ENCODE measurements at regions of chr3 and their contacts with region 1.

Region 1: DNA sequence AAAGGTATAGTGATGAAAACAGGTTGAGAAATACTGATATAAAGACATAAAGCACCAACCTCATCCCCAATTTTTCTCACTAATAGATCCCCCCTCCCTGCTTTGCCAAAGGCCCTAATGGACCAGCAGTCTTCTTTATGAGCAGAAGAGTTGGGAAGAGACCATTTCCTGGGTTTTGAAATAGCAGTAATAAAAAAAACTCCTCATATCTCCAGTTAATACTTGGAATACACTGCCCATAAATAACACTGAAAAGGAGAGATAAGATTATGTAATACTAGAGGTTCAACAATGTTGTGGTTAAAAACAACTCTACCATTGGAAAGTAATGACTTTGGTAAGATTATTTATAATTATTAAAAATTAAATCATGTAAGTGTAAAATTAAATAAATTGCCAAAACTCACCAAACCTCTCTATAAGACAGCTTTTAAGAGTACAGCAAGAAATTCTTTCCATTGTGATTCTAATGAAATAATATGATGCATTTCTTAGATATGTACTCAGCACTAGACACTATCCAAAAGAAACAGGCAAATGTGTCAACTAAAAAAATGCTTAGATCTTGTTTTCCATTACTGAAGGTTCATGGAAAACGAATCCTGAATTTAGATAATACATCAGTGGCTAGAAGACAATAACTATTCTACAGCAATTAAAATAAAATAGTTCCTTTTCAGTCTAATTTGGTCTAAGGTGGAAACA is 88.2 kb downstream of the FAIM start:
- DNase-seq: no peak
- ATAC-seq: no peak
- H3K4me3 ChIP-seq: no peak overlapping the region
- H3K27ac ChIP-seq: no peak overlapping the region
- H3K4me1 ChIP-seq: no peaks in the 10 kb centered on the region
- H3K27me3 ChIP-seq: no peaks in the 10 kb centered on the region
- CTCF ChIP-seq: no peak
- POLR2A ChIP-seq: no peak

Region 2: GRCh38 chr3:138174421-138175122 is 522.2 kb before region 1 on chr3 and contains the start of gene DBR1:
- intact Hi-C with region 1: no loop called
- DNase-seq: peak; percentile 74 to 84 (median 78)
- ATAC-seq: peak; percentile 95 to 97 (median 96)
- H3K4me3 ChIP-seq: peak within 1 kb of the TSS; percentile 71 to 88 (median 75)
- H3K27ac ChIP-seq: peak within 1 kb of the TSS; percentile 38 to 65 (median 58)
- H3K4me1 ChIP-seq: peaks cover 0 to 13% (median 4%) of the 10 kb centered on the region in 4 donors
- H3K27me3 ChIP-seq: no peaks in the 10 kb centered on the region
- CTCF ChIP-seq: no peak
- POLR2A ChIP-seq: peak; percentile 87
- total RNA-seq, gene DBR1: 3.2 to 6.1 (median 4.6) TPM

Region 3: GRCh38 chr3:138923531-138923994 is 226.7 kb after region 1 on chr3:
- intact Hi-C with region 1: loop called in 1 of 2 experiments (anchors 5 kb)
- DNase-seq: peak; percentile 73 to 81 (median 76)
- ATAC-seq: peak; percentile 94 to 97 (median 95)
- H3K4me3 ChIP-seq: no peak overlapping the region
- H3K27ac ChIP-seq: no peak overlapping the region
- H3K4me1 ChIP-seq: no peaks in the 10 kb centered on the region
- H3K27me3 ChIP-seq: no peaks in the 10 kb centered on the region
- CTCF ChIP-seq: peak; percentile 88 to 96 (median 94)
- POLR2A ChIP-seq: no peak

Region 4: DNA sequence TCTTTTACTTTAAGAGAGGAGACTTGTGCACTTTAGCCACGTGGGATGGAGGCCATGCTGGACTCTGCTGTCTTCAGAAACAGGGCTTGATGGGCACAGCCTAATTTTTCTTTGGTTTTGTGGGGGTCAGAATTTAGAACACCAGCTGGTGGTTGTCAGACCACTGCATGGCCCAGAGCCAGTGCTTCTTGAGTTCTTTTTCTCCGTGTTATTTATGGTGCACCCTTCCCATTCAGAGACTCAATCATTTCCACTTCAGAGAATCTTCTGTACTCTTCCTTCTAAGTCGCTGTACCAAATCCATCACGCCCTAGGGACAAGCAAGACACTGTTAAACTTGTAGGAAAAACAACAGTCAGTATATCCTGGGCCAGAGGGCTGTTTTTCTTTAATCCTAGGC is 289.1 kb after region 1 on chr3:
- intact Hi-C with region 1: no loop called
- DNase-seq: no peak
- ATAC-seq: no peak
- H3K4me3 ChIP-seq: no peak overlapping the region
- H3K27ac ChIP-seq: no peak overlapping the region
- H3K4me1 ChIP-seq: no peaks in the 10 kb centered on the region
- H3K27me3 ChIP-seq: no peaks in the 10 kb centered on the region
- CTCF ChIP-seq: no peak
- POLR2A ChIP-seq: no peak

Measured in right lobe of liver (tissue), 6 donors.